ENCODE measurements at regions of chr1 and their contacts with region 1.

Region 1: DNA sequence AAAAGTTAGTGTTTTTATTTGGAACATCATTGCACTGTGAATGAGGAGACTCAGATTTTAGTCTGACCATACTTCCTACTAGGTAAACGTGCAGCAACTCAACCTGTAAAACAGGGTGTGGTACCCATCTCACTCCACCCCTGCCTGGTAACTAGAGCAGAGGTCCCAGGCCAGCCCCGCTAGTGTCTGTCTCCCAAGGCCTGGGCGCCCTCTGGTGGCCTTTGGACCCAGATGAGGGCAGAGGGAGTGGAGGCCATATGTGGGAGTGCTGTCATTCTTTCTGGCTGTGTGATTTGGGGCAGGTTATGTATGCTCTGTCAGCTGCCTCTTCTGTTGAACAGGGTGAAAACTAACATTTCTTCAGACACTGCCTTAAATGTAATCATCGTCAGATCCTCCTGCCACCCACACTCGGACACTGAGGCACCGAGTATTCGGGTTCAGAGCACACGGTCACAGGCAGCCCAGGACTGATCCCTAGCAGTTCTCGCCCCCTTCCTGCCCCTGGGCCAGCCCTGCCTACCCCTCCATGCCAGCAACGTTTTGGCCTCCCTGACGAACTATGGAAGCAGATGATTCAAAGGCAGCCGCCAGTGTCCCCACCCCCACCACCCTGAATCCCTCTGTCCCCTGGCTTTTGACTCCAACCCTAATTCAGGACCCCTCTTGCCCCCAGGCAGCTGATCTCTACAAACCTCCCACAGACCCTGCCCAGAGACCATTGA is 76.0 kb downstream of the CD247 start:
- DNase-seq: peak; percentile 42 to 77
- ATAC-seq: peak; percentile 81 to 94
- H3K4me3 ChIP-seq: no peak overlapping the region
- H3K27ac ChIP-seq: no peak overlapping the region
- H3K4me1 ChIP-seq: peaks cover 0 to 12% of the 10 kb centered on the region in 2 donors
- H3K27me3 ChIP-seq: peaks cover 0 to 7% (median 0%) of the 10 kb centered on the region in 3 donors
- CTCF ChIP-seq: peak; percentile 74 to 91 (median 82)
- POLR2A ChIP-seq: no peak

Region 2: GRCh38 chr1:167136191-167136614 is 306.1 kb before region 1 on chr1:
- in situ Hi-C with region 1: no loop called
- intact Hi-C with region 1: no loop called
- DNase-seq: peak; percentile 81 to 87
- ATAC-seq: peak; percentile 92 to 96
- H3K4me3 ChIP-seq: no peak overlapping the region
- H3K27ac ChIP-seq: peak overlapping the region; percentile 68 to 88 (median 80)
- H3K4me1 ChIP-seq: peaks cover 21 to 59% of the 10 kb centered on the region in 2 donors
- H3K27me3 ChIP-seq: no peaks in the 10 kb centered on the region
- CTCF ChIP-seq: no peak
- POLR2A ChIP-seq: no peak

Region 3: DNA sequence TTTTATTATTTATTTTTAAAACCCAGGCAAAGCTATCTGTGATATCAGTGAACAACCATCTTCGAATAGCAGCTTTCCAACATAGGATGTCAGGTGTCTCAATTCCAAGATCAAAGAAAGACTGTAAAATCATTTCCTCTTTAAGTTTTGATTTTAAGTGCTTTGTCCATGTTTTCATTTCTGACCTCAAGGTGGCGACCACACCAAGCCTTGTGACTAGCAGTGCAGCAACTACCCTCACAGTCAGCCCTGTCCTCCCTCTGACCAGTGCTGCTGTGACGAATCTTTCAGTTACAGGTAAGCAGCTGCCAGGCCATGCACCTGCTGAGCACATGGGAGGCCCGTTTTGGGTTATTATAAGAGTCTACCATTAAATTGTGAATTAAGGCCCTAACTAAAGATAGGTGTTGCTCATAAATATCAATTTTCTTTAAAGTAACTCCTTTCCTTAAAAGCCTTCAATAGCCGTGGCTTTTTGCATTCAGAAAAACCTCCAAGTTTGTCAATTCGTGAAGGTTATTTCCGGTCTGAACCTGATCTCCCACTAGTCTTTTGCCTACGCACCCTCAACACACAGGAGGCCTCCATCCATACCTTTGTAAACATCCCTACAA is 40.9 kb before region 1 on chr1:
- in situ Hi-C with region 1: loop called in 1 of 4 experiments (anchors 5 kb)
- intact Hi-C with region 1: no loop called
- DNase-seq: no peak
- ATAC-seq: no peak
- H3K4me3 ChIP-seq: no peak overlapping the region
- H3K27ac ChIP-seq: no peak overlapping the region
- H3K4me1 ChIP-seq: no peaks in the 10 kb centered on the region
- H3K27me3 ChIP-seq: no peaks in the 10 kb centered on the region
- CTCF ChIP-seq: peak in 4 of 5 experiments; percentile 20 to 43 (median 28)
- POLR2A ChIP-seq: no peak